Activated CD4-positive, alpha-beta T cell treated with anti-CD3 and anti-CD28 coated beads for 36 hours (primary cell): ENCODE measurements at regions of chr10 and their contacts with region 1.

Region 1: GRCh38 chr10:120318862-120319261 is 138.2 kb upstream of the PLPP4 start:
- DNase-seq: no peak
- ATAC-seq: no peak
- H3K4me3 Mint-ChIP-seq: no peak overlapping the region
- H3K27ac Mint-ChIP-seq: no peak overlapping the region
- H3K4me1 Mint-ChIP-seq: no peaks in the 10 kb centered on the region
- H3K27me3 Mint-ChIP-seq: peaks cover 16% of the 10 kb centered on the region

Region 2: DNA sequence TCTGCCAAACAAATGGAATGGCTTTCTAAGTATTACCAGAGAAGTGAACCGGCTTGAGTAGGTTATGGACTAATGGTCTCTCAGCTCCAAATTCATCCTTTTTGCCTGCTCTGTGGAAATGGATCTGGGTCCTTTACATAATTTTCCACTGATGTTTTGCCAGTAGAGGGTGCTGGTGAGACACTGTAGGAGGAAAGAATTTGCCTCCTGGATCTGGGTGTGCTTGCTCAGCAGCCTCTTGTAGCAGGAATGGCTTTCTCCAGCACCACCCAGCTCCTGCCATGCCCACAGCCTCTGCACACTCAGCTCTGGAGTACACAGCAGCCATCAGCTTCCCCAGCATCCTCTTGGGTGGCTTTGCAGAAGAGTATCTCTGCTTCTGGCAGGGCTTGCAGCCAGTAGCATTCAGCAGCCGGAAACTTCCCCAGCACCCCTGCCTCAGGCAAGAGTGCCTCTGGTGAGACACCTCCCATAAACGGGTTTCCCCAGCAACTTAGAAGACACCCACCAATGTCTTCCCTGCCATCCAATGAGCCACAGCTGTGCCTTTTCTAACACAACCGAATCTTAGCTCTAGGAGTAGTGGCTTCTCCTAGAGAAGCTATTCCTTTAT is 96.9 kb before region 1 on chr10:
- CTCF ChIA-PET with region 1: interaction called, 10 read pairs
- POLR2A ChIA-PET with region 1: no interaction called
- intact Hi-C with region 1: no loop called
- DNase-seq: peak; percentile 31
- ATAC-seq: no peak
- H3K4me3 Mint-ChIP-seq: no peak overlapping the region
- H3K27ac Mint-ChIP-seq: no peak overlapping the region
- H3K4me1 Mint-ChIP-seq: no peaks in the 10 kb centered on the region
- H3K27me3 Mint-ChIP-seq: peaks cover 5% of the 10 kb centered on the region

Region 3: GRCh38 chr10:120729547-120729946 is 410.7 kb after region 1 on chr10:
- CTCF ChIA-PET with region 1: no interaction called
- POLR2A ChIA-PET with region 1: no interaction called
- intact Hi-C with region 1: no loop called
- DNase-seq: no peak
- ATAC-seq: no peak
- H3K4me3 Mint-ChIP-seq: no peak overlapping the region
- H3K27ac Mint-ChIP-seq: no peak overlapping the region
- H3K4me1 Mint-ChIP-seq: no peaks in the 10 kb centered on the region
- H3K27me3 Mint-ChIP-seq: peaks cover 2% of the 10 kb centered on the region